ENCODE measurements at regions of chr15 and their contacts with region 1.

Region 1: GRCh38 chr15:91852741-91853510 is 582 bp upstream of the SLCO3A1 start:
- DNase-seq: no peak
- H3K4me3 ChIP-seq: peak overlapping the region; percentile 63
- CTCF ChIP-seq: peak; percentile 73

Region 2: GRCh38 chr15:91839867-91840266 is 13.1 kb before region 1 on chr15:
- CTCF ChIA-PET with region 1: interaction called, 12 read pairs
- POLR2A ChIA-PET with region 1: no interaction called
- DNase-seq: no peak
- H3K4me3 ChIP-seq: no peak overlapping the region
- CTCF ChIP-seq: no peak

Region 3: DNA sequence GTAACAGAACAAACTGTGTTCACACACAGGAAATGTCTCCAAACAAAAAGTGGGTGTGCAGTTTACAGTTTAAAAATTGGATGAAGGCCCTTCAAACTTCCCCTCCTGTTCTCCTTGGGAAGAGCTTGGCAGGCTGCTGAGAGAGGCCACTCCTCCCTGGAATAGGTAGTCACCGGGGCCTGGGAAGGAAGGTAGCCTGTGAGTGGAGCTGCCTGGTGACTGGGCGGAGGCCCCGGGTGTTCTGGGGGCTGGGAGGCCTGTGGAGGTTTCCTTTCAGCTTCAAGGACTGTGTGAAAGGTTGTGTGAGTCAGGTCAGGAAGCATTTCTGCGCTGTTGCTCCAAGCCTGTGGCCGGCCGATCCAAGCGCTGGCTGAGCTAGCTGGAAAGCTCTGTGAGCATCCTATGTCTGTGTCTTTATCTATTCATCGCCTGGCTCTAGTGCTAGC is 14.7 kb after region 1 on chr15:
- CTCF ChIA-PET with region 1: interaction called, 98 read pairs
- POLR2A ChIA-PET with region 1: interaction called, 3 read pairs
- DNase-seq: no peak
- H3K4me3 ChIP-seq: no peak overlapping the region
- CTCF ChIP-seq: no peak

Region 4: GRCh38 chr15:91942676-91943576 is 90.0 kb after region 1 on chr15:
- CTCF ChIA-PET with region 1: interaction called, 17 read pairs
- POLR2A ChIA-PET with region 1: no interaction called
- DNase-seq: peak; percentile 23
- H3K4me3 ChIP-seq: no peak overlapping the region
- CTCF ChIP-seq: no peak

Region 5: GRCh38 chr15:92077353-92078085 is 224.6 kb after region 1 on chr15:
- CTCF ChIA-PET with region 1: interaction called, 102 read pairs
- POLR2A ChIA-PET with region 1: no interaction called
- DNase-seq: no peak
- H3K4me3 ChIP-seq: no peak overlapping the region
- CTCF ChIP-seq: peak; percentile 82

Measured in AG04449 (cell line).